Right lobe of liver (tissue), 6 donors: ENCODE measurements at regions of chr4 and their contacts with region 1.

Region 1: GRCh38 chr4:48079972-48080391 is 54.1 kb downstream of the TXK start:
- DNase-seq: no peak
- ATAC-seq: no peak
- H3K4me3 ChIP-seq: no peak overlapping the region
- H3K27ac ChIP-seq: no peak overlapping the region
- H3K4me1 ChIP-seq: no peaks in the 10 kb centered on the region
- H3K27me3 ChIP-seq: no peaks in the 10 kb centered on the region
- CTCF ChIP-seq: no peak
- POLR2A ChIP-seq: no peak

Region 2: DNA sequence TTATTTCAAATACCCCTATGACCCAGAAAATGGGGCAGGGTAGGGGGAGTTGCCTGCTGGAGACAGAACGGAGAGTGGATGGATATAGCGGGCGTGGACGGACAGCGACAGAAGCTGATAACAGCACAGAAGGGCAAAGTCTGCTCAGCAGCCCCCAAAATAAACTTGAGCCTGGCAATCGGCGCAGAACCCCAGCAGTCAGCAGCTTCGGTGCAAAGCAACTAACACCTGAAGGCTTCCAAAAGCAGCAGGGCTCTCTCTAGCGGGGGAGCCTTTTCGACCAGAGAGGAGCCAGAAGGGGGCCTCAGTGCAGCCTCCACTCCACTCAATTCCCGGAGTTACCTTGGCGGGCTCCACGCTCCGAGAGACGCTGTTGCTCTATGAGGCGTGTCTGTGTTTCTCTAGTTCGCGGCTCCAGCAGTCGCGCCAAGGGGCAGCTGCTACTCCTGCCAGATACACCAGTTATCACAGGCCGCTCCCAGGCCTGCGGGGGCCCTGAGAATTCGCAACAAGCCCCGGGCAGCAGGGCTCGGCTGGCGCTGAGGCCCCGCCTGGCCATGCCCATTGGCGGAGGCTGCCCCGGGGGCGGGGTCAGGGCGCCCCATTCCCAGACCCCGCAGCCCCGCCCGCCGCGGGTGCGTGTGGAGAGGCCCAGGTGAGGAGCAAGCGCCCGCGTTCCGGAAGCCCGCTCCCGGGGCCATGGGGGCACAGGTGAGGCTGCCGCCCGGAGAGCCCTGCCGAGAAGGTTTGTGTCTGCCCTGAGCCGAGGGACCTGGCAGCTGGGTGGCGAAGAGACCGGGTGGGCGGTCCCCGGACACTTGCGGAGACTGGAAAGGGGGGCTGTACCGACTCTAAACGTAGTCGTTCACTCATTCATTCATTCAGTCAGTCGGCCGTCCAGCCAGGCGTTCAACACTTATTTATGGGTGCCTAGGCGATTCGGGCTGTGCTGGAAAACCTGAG is 63.6 kb before region 1 on chr4 and contains the starts of genes CNGA1 and NIPAL1:
- intact Hi-C with region 1: loop called in 1 of 2 experiments (anchors 10 kb)
- DNase-seq: peak; percentile 91 to 95 (median 94)
- ATAC-seq: peak; percentile 92 to 98 (median 95)
- H3K4me3 ChIP-seq: peak within 1 kb of the TSS; percentile 64 to 70 (median 64)
- H3K27ac ChIP-seq: peak within 1 kb of the TSS; percentile 35 to 87 (median 87)
- H3K4me1 ChIP-seq: peaks cover 0 to 9% (median 1%) of the 10 kb centered on the region in 4 donors
- H3K27me3 ChIP-seq: no peaks in the 10 kb centered on the region
- CTCF ChIP-seq: peak in 3 of 4 donors; percentile 20 to 34 (median 29)
- POLR2A ChIP-seq: peak; percentile 83
- total RNA-seq, gene CNGA1: 8.1 to 14.9 (median 11.1) TPM
- total RNA-seq, gene NIPAL1: 4.8 to 11.9 (median 7.6) TPM